Posterior vena cava (tissue), 2 donors: ENCODE measurements at regions of chr11 and their contacts with region 1.

Region 1: GRCh38 chr11:128467610-128468041 is 119.7 kb downstream of the ETS1 start:
- DNase-seq: no peak

Region 2: DNA sequence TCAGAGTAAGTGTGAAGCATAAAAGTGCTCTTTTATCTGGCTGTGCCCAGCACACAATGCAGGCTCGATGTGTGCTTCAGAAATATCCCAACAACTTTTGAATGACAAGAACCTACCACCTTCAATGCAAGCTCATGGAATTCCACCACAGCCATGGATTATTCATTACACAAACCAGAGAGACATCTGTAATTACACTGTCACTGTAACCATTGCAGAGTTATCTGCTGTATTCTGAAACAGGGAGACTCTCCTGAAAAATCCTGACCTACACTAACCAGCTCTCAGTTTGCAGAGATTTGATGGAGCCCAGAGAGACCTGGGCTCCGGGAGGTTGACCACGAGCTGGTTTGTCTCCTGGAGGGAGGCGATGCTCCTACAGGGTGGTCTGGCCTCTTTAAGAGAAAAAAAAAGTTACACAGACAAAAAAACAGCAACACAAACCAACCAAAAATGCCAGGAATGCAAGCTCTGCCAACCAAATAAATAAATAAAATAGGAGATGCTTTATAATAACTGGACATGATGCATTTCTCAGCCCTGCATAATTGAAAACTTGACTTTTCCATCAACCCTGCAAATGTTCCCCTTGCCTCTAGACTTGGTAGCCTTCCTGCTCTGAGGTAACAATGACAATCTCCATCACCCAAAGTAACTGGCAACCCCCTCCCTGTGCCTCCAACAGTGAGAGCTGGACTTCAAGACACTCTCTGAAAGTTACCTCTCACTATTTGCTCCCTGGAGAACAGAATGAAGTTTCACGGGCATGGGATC is 50.0 kb after region 1 on chr11:
- intact Hi-C with region 1: loop called in 1 of 2 experiments (anchors 10 kb)
- DNase-seq: no peak

Region 3: DNA sequence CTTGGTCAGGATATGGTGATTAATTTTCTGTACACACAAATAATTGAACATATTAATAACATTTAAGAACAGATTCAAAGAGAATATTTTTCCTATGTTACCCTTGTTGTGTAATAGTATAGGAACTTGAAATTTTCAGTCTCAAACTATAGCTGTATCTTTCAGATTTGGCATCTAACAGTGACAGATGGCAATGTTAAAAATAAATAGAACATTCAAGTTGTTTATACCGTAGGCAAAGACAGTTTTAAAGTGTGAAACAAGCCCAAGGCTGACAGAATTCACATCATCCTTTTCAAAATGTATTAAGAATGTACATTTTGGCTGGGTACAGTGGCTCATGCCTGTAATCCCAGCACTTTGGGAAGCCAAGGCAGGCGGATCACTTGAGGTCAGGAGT is 567.6 kb after region 1 on chr11:
- intact Hi-C with region 1: no loop called
- DNase-seq: no peak